Activated B cell treated with CpG ODN at 0.5 μM for 24 hours (primary cell): ENCODE measurements at regions of chr2 and their contacts with region 1.

Region 1: GRCh38 chr2:30095402-30095801 is 51.4 kb upstream of the YPEL5 start:
- DNase-seq: no peak
- ATAC-seq: no peak
- H3K4me3 Mint-ChIP-seq: no peak overlapping the region
- H3K27ac Mint-ChIP-seq: no peak overlapping the region
- H3K4me1 Mint-ChIP-seq: no peaks in the 10 kb centered on the region
- H3K27me3 Mint-ChIP-seq: peaks cover 21% of the 10 kb centered on the region
- CTCF ChIP-seq: no peak

Region 2: DNA sequence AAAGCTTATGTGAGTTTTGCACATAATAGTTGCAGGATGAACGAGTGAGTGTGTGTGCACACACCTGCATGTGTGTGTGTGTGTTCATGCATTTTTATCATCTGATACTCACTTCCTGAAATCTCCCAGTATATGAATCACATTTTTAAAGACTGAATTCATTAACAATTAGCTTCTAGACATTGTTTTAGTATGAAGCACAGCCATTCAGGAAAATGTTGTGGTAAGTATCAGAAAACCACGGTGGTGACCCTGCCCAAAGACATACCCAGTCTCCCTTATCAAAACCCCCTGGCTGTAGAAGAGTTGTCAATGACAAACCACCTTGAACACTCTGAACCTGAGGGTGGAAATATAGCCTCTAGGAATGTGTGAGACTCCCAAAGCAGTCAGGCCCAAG is 394.8 kb before region 1 on chr2:
- CTCF ChIA-PET with region 1: no interaction called
- POLR2A ChIA-PET with region 1: no interaction called
- intact Hi-C with region 1: no loop called
- DNase-seq: no peak
- ATAC-seq: no peak
- H3K4me3 Mint-ChIP-seq: no peak overlapping the region
- H3K27ac Mint-ChIP-seq: no peak overlapping the region
- H3K4me1 Mint-ChIP-seq: no peaks in the 10 kb centered on the region
- H3K27me3 Mint-ChIP-seq: no peaks in the 10 kb centered on the region
- CTCF ChIP-seq: no peak

Region 3: DNA sequence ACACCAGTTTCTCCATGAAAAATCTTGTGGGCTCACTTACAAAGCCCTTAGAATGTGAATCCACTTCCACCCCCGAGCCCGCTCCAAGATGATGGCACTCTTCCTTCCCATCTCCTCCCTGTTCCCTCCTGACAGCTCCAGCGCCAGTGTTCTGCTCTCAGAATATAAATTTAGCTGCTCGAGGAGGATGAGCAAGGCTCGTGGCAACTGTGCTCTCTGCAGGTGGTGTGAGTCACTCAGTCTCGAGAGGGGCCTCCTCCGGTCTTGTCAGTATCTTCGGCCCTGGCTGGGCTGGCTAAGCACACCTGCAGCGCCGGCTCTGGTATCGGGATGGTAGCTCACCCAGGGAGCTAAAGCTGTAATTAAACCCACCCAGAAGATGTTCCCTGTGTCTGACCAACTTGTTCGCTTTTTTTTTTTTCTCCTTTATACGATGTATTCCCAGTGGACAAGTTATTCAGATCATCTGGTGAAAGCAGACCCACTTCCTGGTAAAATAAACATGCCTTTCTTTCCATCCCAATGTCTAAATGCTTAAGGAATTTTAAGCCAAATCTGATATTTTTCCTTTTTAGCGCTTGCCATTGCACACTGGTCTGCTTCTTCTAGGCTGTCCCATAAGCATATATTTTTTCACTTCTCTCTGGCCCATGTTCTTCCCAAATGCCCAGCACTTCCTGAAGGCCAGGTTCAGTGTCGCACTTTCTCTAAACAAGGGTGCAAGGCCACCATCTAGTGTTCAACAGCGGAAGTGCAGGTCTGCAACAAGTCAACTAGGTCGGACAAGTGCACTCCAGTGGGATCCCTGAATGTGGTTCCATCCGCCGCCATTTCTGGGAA is 20.0 kb after region 1 on chr2:
- CTCF ChIA-PET with region 1: interaction called, 4 read pairs
- POLR2A ChIA-PET with region 1: no interaction called
- intact Hi-C with region 1: loop called (anchors 1 kb)
- DNase-seq: no peak
- ATAC-seq: no peak
- H3K4me3 Mint-ChIP-seq: no peak overlapping the region
- H3K27ac Mint-ChIP-seq: no peak overlapping the region
- H3K4me1 Mint-ChIP-seq: peaks cover 2% of the 10 kb centered on the region
- H3K27me3 Mint-ChIP-seq: peaks cover 29% of the 10 kb centered on the region
- CTCF ChIP-seq: no peak

Region 4: DNA sequence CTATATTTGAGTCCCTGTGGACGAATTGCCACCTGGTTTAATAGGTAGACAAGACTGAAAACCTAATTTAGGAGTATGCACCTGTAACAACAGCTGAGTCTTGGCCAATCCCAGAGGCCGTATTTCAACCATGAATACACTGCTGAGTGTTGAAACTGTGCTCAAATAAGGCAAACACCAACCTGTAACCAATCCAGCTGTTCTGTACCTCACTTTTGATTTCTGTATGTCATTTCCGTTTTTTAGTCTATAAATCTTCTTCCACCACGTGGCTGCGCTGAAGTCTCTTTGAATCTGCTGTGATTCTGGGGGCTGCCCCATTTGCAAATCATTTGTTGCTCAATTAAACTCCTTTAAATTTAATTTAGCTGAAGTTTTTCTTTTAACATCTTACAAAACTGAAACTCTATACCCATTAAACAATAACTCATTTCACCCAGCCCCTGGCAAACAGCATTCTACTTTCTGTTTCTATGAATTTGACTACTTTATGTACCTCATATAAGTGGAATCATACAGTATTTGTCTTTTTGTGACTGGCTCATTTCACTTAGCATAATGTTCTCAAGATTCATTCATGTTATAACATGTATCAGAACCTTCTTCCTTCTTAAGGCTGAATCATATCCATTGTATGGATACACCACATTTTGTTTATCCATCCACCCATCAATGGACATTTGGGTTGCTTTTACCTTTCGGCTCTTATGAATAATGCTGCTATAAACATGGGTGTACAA is 43.9 kb after region 1 on chr2:
- CTCF ChIA-PET with region 1: no interaction called
- POLR2A ChIA-PET with region 1: no interaction called
- intact Hi-C with region 1: loop called (anchors 2 kb)
- DNase-seq: no peak
- ATAC-seq: peak; percentile 71
- H3K4me3 Mint-ChIP-seq: peak overlapping the region; percentile 32
- H3K27ac Mint-ChIP-seq: peak overlapping the region; percentile 64
- H3K4me1 Mint-ChIP-seq: peaks cover 11% of the 10 kb centered on the region
- H3K27me3 Mint-ChIP-seq: peaks cover 14% of the 10 kb centered on the region
- CTCF ChIP-seq: no peak